GM10248 (cell line): ENCODE measurements at regions of chr10 and their contacts with region 1.

Region 1: DNA sequence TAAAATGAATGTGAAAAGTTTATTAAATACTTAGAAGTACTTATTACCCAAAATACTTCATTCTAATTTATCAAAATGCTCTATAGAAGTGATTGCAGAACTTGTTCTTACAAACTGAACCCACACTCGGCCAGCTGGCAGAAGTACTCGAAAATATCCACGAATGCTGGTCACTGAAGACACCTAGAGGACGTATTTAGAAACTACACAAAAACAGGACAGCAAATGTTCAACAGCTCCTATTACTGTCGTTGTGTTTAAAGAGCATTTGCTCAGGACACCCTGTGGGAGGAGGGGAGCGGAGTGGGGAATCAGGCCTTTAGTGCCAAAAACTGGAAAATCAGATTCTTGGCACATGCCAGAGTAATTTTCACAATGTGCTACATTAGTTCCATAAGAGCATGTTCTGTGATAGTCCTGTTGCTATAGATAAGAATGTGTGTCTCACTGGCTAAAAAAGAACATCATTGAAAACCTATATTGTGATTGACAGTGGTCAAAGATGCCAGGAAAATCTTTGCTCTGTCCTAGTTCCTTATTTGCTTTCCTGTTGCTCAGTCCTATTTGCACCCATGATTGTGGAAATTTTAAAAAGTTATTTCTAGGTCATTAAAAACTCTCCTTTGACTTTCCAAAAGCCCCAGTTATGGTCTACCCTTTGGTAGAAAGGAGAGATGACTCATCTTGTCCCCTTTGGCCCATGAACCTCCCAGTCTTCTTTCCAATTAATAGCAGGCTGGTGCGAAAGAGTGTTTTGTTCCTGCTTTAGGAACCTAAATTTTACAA is 49.0 kb upstream of the NRBF2 start:
- DNase-seq: peak; percentile 56
- CTCF ChIP-seq: peak; percentile 61

Region 2: GRCh38 chr10:62554632-62555199 is 529.4 kb before region 1 on chr10:
- CTCF ChIA-PET with region 1: interaction called, 12 read pairs
- POLR2A ChIA-PET with region 1: no interaction called
- DNase-seq: peak; percentile 31
- CTCF ChIP-seq: peak; percentile 28

Region 3: DNA sequence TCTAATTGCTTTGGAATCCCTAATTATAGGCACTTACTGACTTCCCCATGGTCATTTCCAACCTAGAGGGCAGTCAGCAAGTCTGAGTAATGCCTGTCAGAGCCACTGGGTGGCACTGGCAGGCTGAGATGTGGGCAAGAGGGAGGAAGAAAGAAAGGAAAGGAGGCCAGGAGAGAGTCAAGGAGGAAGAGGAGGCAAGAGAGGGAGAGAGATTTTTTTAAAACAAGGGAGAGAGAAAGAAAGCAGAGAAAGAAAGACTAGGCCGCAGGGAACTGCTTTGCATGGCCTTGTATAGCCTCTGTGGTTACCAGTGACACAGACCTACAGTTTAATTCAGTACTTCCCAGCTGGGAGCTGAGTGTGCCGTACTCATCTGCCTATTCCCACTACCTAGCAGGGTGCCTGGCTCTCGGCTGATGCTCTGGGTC is 490.0 kb before region 1 on chr10:
- CTCF ChIA-PET with region 1: interaction called, 44 read pairs
- POLR2A ChIA-PET with region 1: no interaction called
- DNase-seq: peak; percentile 54
- CTCF ChIP-seq: peak; percentile 98

Region 4: DNA sequence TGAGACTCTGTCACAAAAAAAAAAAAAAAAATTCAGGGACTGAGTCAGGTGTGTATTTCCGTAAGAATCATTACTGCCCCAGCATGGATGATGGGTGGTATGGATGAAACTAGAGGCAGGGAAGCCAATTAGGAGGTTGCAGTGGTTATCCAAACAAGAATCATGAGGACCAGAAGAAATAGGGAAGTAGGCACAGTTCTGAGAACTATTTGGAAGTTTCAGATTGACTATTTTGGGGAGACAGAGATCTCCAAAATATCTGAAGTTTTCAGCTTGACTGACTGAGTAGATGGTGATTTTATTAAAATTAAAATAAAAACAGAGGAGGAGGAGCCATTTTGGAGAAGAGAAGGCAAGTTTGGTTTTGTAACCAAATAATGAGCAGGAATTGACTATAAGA is 70.3 kb before region 1 on chr10:
- CTCF ChIA-PET with region 1: no interaction called
- POLR2A ChIA-PET with region 1: no interaction called
- DNase-seq: no peak
- CTCF ChIP-seq: no peak

Region 5: GRCh38 chr10:63042256-63042655 is 41.8 kb before region 1 on chr10:
- CTCF ChIA-PET with region 1: no interaction called
- POLR2A ChIA-PET with region 1: no interaction called
- DNase-seq: no peak
- CTCF ChIP-seq: no peak

Region 6: DNA sequence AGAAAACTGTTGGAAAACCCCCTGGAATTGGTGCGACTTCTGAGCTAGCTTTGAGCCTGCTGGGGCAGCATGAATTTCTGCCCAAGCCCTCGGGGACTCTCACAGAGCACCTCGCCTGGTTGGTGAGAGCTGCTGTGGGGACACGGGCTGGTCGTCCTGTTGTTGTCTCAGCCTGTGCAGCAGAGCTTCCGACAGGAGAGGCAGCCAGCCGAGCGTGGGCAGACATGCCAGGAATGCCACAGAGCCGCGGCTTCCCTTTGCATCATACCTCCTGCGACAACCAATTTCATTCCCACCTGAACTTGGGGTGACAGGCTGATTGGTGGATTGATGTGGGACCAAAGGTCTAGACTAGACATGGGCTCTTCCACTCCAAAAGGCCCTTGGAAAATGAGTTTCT is 11.1 kb before region 1 on chr10:
- CTCF ChIA-PET with region 1: interaction called, 14 read pairs
- POLR2A ChIA-PET with region 1: no interaction called
- DNase-seq: no peak
- CTCF ChIP-seq: no peak

Region 7: GRCh38 chr10:63099734-63100133 is 15.6 kb after region 1 on chr10:
- CTCF ChIA-PET with region 1: interaction called, 11 read pairs
- POLR2A ChIA-PET with region 1: no interaction called
- DNase-seq: no peak
- CTCF ChIP-seq: no peak

Region 8: GRCh38 chr10:63173468-63174232 is 89.6 kb after region 1 on chr10:
- CTCF ChIA-PET with region 1: no interaction called
- POLR2A ChIA-PET with region 1: no interaction called
- DNase-seq: peak; percentile 52
- CTCF ChIP-seq: no peak

Region 9: DNA sequence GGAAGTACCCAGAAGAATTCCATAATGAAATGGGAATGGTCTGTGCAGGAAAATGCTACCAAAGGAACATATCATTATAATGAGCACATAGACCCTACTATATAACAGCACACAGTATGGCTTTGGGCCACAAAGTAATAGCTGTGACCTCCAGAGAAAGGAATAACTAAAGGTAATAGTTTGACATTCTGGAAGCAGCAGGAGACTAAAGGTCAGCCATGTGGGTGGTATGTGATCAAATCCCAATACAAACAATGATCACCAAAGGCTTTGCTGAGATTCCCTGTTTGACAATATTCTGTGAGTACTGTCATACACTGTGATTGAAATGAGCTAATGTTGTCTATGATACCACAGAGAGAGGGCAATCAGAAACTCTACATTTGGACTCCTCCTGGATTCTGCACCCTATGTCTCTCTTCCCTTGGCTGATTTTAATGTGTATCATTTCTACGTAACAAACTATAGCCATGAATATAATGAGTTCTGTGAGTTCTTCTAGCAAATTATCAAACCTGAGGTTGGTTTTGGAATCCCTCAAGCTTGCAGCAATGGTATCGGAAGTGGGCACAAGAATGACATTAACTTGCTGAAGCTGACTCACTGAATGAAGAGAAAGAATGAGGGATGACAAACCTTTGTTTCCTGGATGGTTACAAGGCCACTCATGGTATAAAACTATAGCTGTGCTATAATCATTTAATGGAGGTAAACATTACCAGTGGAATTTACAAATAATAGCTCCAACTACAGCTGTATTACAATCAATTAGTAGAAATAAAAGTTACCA is 282.1 kb after region 1 on chr10:
- CTCF ChIA-PET with region 1: no interaction called
- POLR2A ChIA-PET with region 1: no interaction called
- DNase-seq: no peak
- CTCF ChIP-seq: no peak